Heart left ventricle (tissue), 16 donors: ENCODE measurements at regions of chr4 and their contacts with region 1.

Region 1: GRCh38 chr4:7307394-7308099 is 115.2 kb downstream of the SORCS2 start:
- DNase-seq: peak in 4 of 5 donors; percentile 29 to 60 (median 41)
- ATAC-seq: peak; percentile 59 to 76 (median 72)
- H3K4me3 ChIP-seq: no peak overlapping the region
- H3K27ac ChIP-seq: no peak overlapping the region
- H3K4me1 ChIP-seq: peaks cover 0 to 21% (median 4%) of the 10 kb centered on the region in 12 donors
- H3K27me3 ChIP-seq: no peaks in the 10 kb centered on the region
- CTCF ChIP-seq: peak in 8 of 12 donors; percentile 9 to 35 (median 22)
- POLR2A ChIP-seq: no peak

Region 2: GRCh38 chr4:7398104-7398423 is 90.5 kb after region 1 on chr4:
- intact Hi-C with region 1: loop called in 1 of 10 experiments (anchors 10 kb)
- DNase-seq: peak; percentile 53 to 87 (median 74)
- ATAC-seq: peak; percentile 53 to 88 (median 76)
- H3K4me3 ChIP-seq: no peak overlapping the region
- H3K27ac ChIP-seq: no peak overlapping the region
- H3K4me1 ChIP-seq: peaks cover 0 to 7% (median 0%) of the 10 kb centered on the region in 12 donors
- H3K27me3 ChIP-seq: peaks cover 0 to 3% (median 0%) of the 10 kb centered on the region in 9 donors
- CTCF ChIP-seq: peak in 3 of 12 donors; percentile 11 to 25 (median 24)
- POLR2A ChIP-seq: no peak